ENCODE measurements at regions of chr2 and their contacts with region 1.

Region 1: GRCh38 chr2:20661067-20661980 is 5.6 kb upstream of the GDF7 start:
- DNase-seq: peak; percentile 88
- H3K4me3 ChIP-seq: peak overlapping the region in 1 of 2 experiments; percentile 5; a peak in 1 of 4 replicates
- H3K27ac ChIP-seq: no peak overlapping the region
- H3K4me1 ChIP-seq: peaks cover 0 to 10% of the 10 kb centered on the region in 2 experiments; a peak in 2 of 4 replicates
- H3K27me3 ChIP-seq: peaks cover 71% of the 10 kb centered on the region
- CTCF ChIP-seq: peak; percentile 99
- EP300 ChIP-seq: 0 out of 4 replicates have a peak, but pooled peaks of 1 of the 2 experiments have one; percentile 23
- RAD21 ChIP-seq: peak; percentile 99

Region 2: DNA sequence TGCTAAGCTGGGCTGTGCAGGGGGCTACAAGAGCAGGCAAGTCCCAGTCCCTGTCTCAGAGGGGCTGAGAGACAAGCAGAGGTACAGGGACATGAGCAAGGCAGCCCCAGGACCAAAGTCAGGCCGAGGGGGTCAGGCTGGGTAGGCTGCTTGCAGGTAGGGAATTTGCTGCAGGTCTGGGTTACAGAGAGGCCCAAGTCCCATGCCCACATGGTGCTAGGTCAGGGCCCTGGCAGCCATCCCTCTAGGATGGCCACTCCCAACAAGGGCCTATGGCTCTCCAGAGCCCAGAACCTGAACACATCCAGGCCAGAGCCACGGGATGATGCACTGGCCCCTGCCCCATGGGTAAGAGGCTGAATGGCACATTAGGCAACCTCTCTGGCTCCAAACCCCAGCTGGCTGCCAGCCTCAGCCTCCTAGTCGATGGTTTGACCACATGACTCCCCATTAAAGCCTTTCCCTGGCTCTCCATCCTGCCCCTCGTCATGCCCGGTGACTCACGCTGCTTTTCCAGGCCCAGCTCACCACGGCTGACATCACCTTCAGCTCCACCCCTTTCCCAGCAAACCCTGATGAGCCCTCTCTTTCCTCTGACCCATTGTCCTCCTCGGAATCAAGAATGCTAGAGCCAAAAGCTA is 520.1 kb before region 1 on chr2:
- CTCF ChIA-PET with region 1: no interaction called
- POLR2A ChIA-PET with region 1: no interaction called
- DNase-seq: no peak
- H3K4me3 ChIP-seq: no peak overlapping the region
- H3K27ac ChIP-seq: peak overlapping the region in 1 of 2 experiments; percentile 80; a peak in 2 of 4 replicates
- H3K4me1 ChIP-seq: peaks cover 9 to 27% of the 10 kb centered on the region in 2 experiments; a peak in 2 of 4 replicates
- H3K27me3 ChIP-seq: no peaks in the 10 kb centered on the region
- CTCF ChIP-seq: no peak
- EP300 ChIP-seq: no peak; a peak in 1 of 4 replicates
- RAD21 ChIP-seq: no peak

Region 3: GRCh38 chr2:20378792-20379519 is 282.4 kb before region 1 on chr2:
- CTCF ChIA-PET with region 1: interaction called, 13 read pairs
- POLR2A ChIA-PET with region 1: no interaction called
- DNase-seq: peak; percentile 93
- H3K4me3 ChIP-seq: no peak overlapping the region
- H3K27ac ChIP-seq: peak overlapping the region in 1 of 2 experiments; percentile 11; a peak in 1 of 4 replicates
- H3K4me1 ChIP-seq: peaks cover 0 to 16% of the 10 kb centered on the region in 2 experiments; a peak in 1 of 4 replicates
- H3K27me3 ChIP-seq: no peaks in the 10 kb centered on the region; the same call in 1 of the 2 replicates
- CTCF ChIP-seq: peak; percentile 97
- EP300 ChIP-seq: no peak
- RAD21 ChIP-seq: peak; percentile 95

Region 4: GRCh38 chr2:20682167-20682920 is 21.0 kb after region 1 on chr2:
- CTCF ChIA-PET with region 1: interaction called, 232 read pairs
- POLR2A ChIA-PET with region 1: no interaction called
- DNase-seq: no peak
- H3K4me3 ChIP-seq: no peak overlapping the region; a peak in 1 of 4 replicates
- H3K27ac ChIP-seq: no peak overlapping the region
- H3K4me1 ChIP-seq: peaks cover 0 to 6% of the 10 kb centered on the region in 2 experiments; a peak in 2 of 4 replicates
- H3K27me3 ChIP-seq: no peaks in the 10 kb centered on the region
- CTCF ChIP-seq: peak; percentile 69
- EP300 ChIP-seq: no peak
- RAD21 ChIP-seq: peak; percentile 72

Region 5: DNA sequence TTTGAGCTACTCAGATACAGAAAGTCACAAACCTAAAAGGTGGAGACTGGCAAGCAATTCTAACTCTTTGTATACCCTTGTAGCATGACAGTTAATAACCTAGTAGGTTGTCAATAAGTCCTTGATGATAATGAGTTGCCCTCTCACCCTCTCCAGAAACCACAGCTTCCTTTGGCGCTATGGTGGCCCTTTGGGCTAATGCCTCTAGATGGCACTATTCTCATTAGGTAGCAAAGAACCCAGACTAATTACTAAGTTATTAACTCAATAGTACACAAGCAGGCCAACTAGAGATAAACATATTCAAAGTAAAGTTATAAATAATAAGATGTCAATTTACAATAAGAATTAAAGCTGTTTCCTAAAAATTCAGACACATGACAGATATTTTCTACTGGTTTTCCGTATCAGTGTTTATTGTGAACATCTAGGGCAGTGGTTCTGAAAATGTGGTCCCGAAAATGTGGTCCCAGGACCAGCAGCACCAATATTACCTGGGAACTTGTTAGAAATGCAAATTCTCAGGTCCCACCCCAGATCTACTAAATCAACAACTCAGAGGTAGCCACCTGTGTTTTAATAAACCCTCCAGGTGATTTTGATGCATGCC is 120.4 kb after region 1 on chr2:
- CTCF ChIA-PET with region 1: interaction called, 35 read pairs
- POLR2A ChIA-PET with region 1: no interaction called
- DNase-seq: peak; percentile 50
- H3K4me3 ChIP-seq: no peak overlapping the region; a peak in 1 of 4 replicates
- H3K27ac ChIP-seq: no peak overlapping the region
- H3K4me1 ChIP-seq: no peaks in the 10 kb centered on the region; a peak in 1 of 4 replicates
- H3K27me3 ChIP-seq: no peaks in the 10 kb centered on the region
- CTCF ChIP-seq: peak; percentile 91
- EP300 ChIP-seq: no peak
- RAD21 ChIP-seq: peak; percentile 83

Region 6: DNA sequence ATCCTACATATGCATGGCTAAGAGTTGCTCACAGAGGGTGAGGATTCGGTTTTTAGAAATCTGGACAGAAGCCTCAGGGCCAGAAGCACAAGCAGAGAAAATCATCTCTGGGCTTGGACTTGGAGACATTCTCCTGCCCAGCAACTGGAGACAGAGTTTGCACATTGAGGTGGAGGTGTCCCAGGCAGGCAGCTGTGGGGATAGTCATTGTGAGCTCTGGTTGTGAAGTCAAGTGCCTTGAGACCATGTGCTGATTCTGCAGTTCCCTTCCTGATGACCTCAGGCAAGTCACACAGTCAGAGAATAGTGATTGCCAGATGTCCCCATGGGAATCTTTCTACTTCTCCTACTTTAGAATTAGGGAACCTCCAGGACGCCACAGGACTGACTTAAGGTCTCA is 270.0 kb after region 1 on chr2:
- CTCF ChIA-PET with region 1: interaction called, 23 read pairs
- POLR2A ChIA-PET with region 1: no interaction called
- DNase-seq: no peak
- H3K4me3 ChIP-seq: no peak overlapping the region
- H3K27ac ChIP-seq: peak overlapping the region; percentile 24 to 58; a peak in 2 of 4 replicates
- H3K4me1 ChIP-seq: peaks cover 20 to 32% of the 10 kb centered on the region in 2 experiments
- H3K27me3 ChIP-seq: no peaks in the 10 kb centered on the region
- CTCF ChIP-seq: no peak
- EP300 ChIP-seq: no peak
- RAD21 ChIP-seq: no peak

Region 7: GRCh38 chr2:20986024-20986939 is 325.0 kb after region 1 on chr2:
- CTCF ChIA-PET with region 1: interaction called, 40 read pairs
- POLR2A ChIA-PET with region 1: no interaction called
- DNase-seq: no peak
- H3K4me3 ChIP-seq: no peak overlapping the region
- H3K27ac ChIP-seq: no peak overlapping the region
- H3K4me1 ChIP-seq: peaks cover 0 to 28% of the 10 kb centered on the region in 2 experiments; a peak in 2 of 4 replicates
- H3K27me3 ChIP-seq: no peaks in the 10 kb centered on the region
- CTCF ChIP-seq: no peak
- EP300 ChIP-seq: no peak
- RAD21 ChIP-seq: no peak

Region 8: DNA sequence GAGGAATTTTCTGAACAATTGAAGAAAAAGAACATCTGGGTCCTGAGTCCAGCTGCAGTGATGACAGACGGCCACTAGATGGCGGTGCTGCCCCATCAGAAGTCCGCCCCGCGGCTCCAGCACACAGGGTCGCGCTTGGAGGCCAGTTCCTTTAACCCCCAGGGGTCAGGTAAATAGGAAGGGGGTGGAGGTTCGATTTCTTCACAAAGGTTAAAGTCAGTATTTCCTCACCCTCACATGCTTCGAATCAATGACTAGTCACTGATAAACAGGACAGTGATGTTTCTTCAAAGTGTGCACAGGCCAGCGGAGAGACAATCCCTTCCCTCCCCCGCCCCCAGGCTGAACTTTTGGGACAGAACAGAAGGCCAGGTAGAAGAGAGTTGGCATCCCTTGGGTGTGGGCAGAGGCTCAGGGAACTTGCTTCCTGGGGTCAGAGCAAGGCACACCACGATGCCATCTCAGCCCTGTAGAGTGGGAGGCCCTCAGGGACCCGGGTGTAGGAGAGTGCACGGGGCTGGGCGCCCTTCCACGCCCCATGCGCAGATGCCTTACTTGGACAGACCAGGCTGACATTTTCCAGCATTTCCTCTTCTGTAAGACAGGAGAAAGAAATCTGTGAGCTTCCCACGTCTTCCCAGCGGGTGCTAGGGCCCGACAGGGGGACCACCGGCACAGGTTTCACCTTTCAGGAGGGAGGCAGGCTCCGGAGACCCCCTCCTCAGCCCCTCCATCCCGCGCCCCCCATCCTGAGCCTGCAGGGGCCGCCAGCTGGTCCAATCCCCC is 381.8 kb after region 1 on chr2:
- CTCF ChIA-PET with region 1: interaction called, 55 read pairs
- POLR2A ChIA-PET with region 1: no interaction called
- DNase-seq: peak; percentile 91
- H3K4me3 ChIP-seq: peak overlapping the region in 1 of 2 experiments; percentile 41; a peak in 1 of 4 replicates
- H3K27ac ChIP-seq: no peak overlapping the region
- H3K4me1 ChIP-seq: peaks cover 0 to 23% of the 10 kb centered on the region in 2 experiments; a peak in 2 of 4 replicates
- H3K27me3 ChIP-seq: no peaks in the 10 kb centered on the region; the same call in 1 of the 2 replicates
- CTCF ChIP-seq: peak; percentile 100
- EP300 ChIP-seq: no peak
- RAD21 ChIP-seq: peak; percentile 100

Measured in SK-N-SH (cell line).